GM18951 (cell line): ENCODE measurements at regions of chrX and their contacts with region 1.

Region 1: GRCh38 chrX:70769659-70770232 is 138.8 kb downstream of the TEX11 start:
- POLR2A ChIP-seq: no peak

Region 2: GRCh38 chrX:70878902-70879301 is 109.2 kb after region 1 on chrX:
- in situ Hi-C with region 1: no loop called
- POLR2A ChIP-seq: no peak

Region 3: GRCh38 chrX:71171110-71171801 is 401.5 kb after region 1 on chrX:
- in situ Hi-C with region 1: loop called (anchors 25 kb)
- POLR2A ChIP-seq: no peak

Region 4: GRCh38 chrX:71565474-71566041 is 795.8 kb after region 1 on chrX:
- in situ Hi-C with region 1: no loop called
- POLR2A ChIP-seq: no peak

Region 5: DNA sequence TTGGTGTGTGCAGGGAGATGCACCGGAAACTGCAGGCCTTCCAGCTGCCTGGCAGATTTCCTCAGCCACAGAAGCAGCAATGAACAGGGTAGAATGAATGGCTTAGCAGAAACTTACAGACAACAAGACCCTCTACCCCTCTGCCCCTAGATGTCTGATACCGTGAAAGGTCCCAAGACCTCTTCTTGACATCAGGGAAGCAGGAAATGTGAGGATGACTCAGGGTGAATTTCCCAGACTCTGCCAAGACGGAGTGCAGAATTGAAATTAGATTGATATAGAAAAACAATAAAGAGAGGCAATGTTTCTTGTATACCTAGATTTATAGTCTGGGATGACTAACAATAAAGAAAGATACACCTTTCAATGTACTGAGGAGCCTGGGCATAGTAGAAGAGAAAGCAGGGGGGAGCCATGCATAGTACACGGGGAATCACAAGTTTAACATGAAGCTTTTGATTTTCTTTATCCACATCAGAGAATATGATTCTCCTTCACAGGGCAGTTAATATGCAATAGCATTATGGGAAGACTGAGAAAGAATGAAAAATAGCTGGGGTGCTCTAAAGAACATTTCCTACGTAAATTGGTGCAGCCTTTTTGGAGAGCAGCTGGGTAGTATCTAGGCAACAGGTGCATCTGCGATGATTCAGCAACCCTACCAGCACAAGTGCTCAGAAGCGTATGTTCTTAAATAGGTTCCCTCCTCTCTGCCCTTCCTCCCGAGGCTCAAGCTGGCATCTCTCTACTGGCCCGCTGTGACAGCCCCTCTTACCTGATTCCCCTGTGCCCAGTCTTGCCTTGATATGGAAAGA is 866.9 kb after region 1 on chrX:
- in situ Hi-C with region 1: no loop called
- POLR2A ChIP-seq: no peak